ENCODE measurements at regions of chr16 and their contacts with region 1.

Region 1: DNA sequence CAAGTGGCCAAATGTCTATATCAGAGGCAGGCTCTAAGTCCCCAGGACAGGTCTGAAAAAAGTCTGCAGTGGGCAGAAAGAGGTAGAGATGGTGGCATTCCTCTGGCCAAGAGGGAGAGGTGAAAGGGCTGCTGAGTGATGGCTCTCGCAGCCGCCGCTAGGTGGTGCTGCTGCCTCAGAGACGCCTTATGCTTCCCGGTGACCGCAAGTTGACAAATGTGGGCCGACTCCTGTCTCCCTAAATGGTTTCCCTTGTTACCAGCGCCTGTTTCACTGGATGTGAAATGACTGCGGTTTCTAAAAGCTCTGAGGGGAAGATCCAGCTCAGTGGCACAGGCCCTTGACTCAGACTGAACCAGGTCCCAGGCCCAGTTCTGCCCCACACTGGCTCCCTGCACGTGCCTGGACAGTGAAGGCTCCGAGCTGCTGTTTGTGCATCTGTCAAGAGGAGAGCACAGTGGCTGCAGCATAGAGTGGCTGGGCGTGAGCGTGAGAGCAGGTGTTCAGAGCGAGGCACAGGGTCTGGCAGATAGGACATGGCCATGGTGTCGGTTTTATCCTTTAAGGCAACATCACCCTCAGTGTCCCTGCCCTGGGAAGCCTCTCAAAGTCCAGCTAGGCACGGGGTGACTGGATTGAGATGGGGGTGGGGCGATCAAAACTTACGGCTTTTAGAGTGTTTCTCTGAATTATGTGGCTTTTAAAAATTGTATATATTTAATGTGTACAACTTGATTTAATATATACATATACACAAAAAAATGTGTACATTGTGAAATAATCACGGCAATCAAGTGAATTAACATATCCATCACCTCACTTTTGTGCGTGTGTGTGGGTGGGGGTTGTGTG is 19.9 kb downstream of the CLEC16A start:
- DNase-seq: peak; percentile 79
- H3K4me3 Mint-ChIP-seq: no peak overlapping the region
- H3K27ac Mint-ChIP-seq: no peak overlapping the region
- H3K4me1 Mint-ChIP-seq: peaks cover 18% of the 10 kb centered on the region
- H3K27me3 Mint-ChIP-seq: no peaks in the 10 kb centered on the region
- CTCF ChIP-seq: peak; percentile 93

Region 2: GRCh38 chr16:10944249-10945064 is 19.8 kb before region 1 on chr16 and contains the start of gene CLEC16A:
- CTCF ChIA-PET with region 1: interaction called, 115 read pairs
- POLR2A ChIA-PET with region 1: interaction called, 4 read pairs
- intact Hi-C with region 1: no loop called
- DNase-seq: peak; percentile 95
- H3K4me3 Mint-ChIP-seq: peak within 1 kb of the TSS; percentile 94
- H3K27ac Mint-ChIP-seq: peak within 1 kb of the TSS; percentile 66
- H3K4me1 Mint-ChIP-seq: peaks cover 56% of the 10 kb centered on the region
- H3K27me3 Mint-ChIP-seq: no peaks in the 10 kb centered on the region
- CTCF ChIP-seq: no peak
- total RNA-seq, gene CLEC16A: 29.1 and 32.4 TPM in 2 replicates

Region 3: DNA sequence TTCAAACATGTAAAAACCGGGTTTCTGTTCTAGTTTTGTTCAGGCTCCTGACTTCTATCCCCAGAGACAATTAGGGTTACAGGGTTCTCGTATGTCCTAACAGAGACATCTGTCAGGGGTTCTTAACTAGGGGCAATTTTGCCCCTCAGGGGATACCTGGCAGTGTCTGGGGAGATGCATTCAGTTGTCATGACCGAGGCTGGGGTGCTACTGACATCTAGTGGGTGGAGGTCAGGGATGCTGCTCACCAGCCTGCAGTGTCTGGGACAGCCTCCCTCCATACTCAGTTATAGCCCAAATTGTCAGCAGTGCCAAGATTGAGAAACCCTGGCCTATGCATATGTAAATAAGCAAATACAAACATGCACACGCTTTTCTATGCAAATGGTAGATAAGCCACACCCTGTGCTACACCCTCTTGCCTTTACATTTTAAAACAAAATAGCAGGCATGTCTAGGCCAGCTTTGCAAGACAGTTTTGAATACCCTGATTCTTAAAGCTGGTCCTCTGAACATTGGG is 17.5 kb after region 1 on chr16:
- CTCF ChIA-PET with region 1: interaction called, 21 read pairs
- POLR2A ChIA-PET with region 1: no interaction called
- intact Hi-C with region 1: no loop called
- DNase-seq: peak; percentile 29
- H3K4me3 Mint-ChIP-seq: no peak overlapping the region
- H3K27ac Mint-ChIP-seq: no peak overlapping the region
- H3K4me1 Mint-ChIP-seq: no peaks in the 10 kb centered on the region
- H3K27me3 Mint-ChIP-seq: no peaks in the 10 kb centered on the region
- CTCF ChIP-seq: peak; percentile 12

Region 4: GRCh38 chr16:11133344-11133943 is 169.2 kb after region 1 on chr16:
- CTCF ChIA-PET with region 1: interaction called, 11 read pairs
- POLR2A ChIA-PET with region 1: interaction called, 3 read pairs
- intact Hi-C with region 1: no loop called
- DNase-seq: peak; percentile 88
- H3K4me3 Mint-ChIP-seq: peak overlapping the region; percentile 21
- H3K27ac Mint-ChIP-seq: peak overlapping the region; percentile 61
- H3K4me1 Mint-ChIP-seq: peaks cover 53% of the 10 kb centered on the region
- H3K27me3 Mint-ChIP-seq: no peaks in the 10 kb centered on the region
- CTCF ChIP-seq: no peak

Region 5: DNA sequence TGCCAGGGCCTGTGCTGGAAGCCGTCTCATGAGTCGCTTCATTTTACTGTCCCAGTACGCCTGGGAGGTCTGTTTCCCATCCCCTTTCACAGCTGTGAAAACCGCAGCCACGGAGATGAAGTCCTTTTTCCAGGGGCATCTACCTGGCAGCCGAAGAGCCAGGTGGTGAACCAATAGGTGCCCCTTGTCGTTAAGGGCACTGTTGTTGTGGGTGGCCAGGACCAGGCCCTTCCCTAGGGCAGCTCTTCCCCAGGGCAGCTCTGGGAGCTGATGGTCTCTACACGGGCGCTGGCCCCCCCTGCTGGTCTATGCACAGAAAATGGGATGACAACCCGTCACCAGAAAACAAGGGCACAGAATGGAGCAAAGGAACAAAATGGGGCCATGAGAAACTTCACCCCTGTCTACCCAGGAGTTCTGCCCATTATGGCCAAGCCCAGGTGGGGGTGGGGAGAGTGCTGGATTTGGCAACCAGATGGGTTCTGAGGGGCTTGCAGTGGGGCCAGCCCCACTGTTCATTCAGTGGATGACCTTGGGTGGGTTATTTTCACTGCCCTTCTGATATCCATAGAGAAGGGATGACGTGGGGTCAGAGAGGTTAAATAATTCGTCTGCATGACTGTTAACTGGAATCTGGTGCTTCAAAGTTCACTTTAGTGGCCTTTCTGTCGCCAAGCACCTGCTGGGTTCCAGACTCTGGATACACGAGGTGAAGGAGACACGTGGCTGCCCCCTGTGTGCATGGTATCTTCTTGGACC is 392.5 kb after region 1 on chr16:
- CTCF ChIA-PET with region 1: interaction called, 9 read pairs
- POLR2A ChIA-PET with region 1: no interaction called
- intact Hi-C with region 1: loop called (anchors 5 kb)
- DNase-seq: peak; percentile 67
- H3K4me3 Mint-ChIP-seq: no peak overlapping the region
- H3K27ac Mint-ChIP-seq: peak overlapping the region; percentile 44
- H3K4me1 Mint-ChIP-seq: peaks cover 20% of the 10 kb centered on the region
- H3K27me3 Mint-ChIP-seq: no peaks in the 10 kb centered on the region
- CTCF ChIP-seq: peak; percentile 14

Region 6: DNA sequence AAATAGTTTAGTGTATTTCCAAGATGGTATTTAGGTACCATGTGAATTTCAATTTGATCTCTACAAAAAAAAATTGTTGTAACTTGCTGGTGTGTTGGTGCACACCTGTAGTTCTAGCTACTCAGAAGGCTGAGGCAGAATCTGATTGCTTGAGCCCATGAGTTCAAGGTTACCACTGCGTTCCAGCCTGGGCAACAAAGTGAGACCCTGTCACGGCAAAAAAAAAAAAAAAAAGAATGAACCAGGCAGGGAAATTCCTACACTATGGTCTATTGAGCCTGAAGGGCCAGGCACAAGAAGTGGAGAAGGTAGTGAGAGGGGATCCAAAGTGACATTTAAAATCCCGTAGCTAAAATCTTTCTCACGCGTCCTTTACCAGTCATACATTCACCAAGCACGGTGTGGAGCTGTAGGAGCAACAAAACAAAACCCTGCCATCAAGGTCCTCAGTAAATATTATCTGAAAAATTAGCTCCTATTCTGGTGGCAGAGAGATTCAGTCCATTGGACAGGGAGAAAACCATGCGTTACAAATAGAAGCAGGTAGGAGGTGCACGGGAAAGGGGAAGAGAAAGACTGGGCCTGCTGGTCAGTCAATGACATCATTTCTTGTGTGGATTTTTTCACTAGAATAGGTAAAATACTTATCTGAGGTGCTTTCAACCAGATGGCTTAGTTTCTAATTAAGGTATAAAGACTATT is 751.1 kb after region 1 on chr16:
- CTCF ChIA-PET with region 1: interaction called, 21 read pairs
- POLR2A ChIA-PET with region 1: no interaction called
- intact Hi-C with region 1: no loop called
- DNase-seq: no peak
- H3K4me3 Mint-ChIP-seq: no peak overlapping the region
- H3K27ac Mint-ChIP-seq: no peak overlapping the region
- H3K4me1 Mint-ChIP-seq: no peaks in the 10 kb centered on the region
- H3K27me3 Mint-ChIP-seq: no peaks in the 10 kb centered on the region
- CTCF ChIP-seq: no peak